Vagina (tissue), 2 donors: ENCODE measurements at regions of chr19 and their contacts with region 1.

Region 1: DNA sequence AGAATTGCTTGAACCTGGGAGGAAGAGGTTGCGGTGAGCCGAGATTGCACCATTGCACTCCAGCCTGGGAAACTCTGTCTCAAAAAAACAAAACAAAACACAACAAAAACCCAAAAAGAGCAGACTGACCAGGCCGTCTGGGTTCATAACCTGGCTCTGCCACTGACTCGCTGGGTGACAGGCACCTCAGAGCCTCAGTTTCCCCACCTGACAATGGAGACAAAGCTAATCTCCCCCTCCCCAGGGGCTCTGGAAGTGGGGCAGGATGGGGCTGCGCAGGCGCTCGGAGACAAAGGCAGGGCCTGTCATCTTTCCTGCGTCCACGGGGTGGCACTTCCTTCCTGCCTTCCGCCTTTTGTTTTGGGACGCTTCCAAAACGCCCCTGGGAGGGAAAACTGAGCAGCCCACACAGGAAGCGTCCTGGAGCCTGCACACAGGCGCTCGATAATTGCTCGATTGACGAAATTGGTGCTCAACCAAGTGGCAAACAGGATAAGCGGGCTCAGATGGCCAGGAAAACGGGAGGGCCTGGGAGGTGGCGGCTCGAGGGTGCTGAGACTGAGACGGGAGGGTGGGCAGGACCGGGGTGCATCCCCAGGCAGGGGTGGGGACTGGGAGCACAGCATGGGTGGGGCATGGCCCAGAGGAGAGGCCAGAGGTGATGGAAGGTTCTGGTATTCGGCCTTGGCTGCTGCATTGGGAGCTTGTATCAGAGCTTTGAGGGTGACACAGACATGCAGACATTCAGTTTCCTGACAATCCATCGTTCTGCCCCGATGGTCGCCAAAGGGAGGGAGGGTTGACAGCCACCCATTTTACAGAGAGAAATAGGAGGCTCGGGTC is 17.8 kb downstream of the SPC24 start:
- DNase-seq: peak in 1 of 2 donors; percentile 96
- H3K4me3 ChIP-seq: peak overlapping the region; percentile 14 to 30
- H3K27ac ChIP-seq: peak overlapping the region; percentile 94
- H3K4me1 ChIP-seq: peaks cover 56% of the 10 kb centered on the region
- H3K27me3 ChIP-seq: no peaks in the 10 kb centered on the region
- CTCF ChIP-seq: peak; percentile 55 to 87 (median 76)
- POLR2A ChIP-seq: no peak

Region 2: DNA sequence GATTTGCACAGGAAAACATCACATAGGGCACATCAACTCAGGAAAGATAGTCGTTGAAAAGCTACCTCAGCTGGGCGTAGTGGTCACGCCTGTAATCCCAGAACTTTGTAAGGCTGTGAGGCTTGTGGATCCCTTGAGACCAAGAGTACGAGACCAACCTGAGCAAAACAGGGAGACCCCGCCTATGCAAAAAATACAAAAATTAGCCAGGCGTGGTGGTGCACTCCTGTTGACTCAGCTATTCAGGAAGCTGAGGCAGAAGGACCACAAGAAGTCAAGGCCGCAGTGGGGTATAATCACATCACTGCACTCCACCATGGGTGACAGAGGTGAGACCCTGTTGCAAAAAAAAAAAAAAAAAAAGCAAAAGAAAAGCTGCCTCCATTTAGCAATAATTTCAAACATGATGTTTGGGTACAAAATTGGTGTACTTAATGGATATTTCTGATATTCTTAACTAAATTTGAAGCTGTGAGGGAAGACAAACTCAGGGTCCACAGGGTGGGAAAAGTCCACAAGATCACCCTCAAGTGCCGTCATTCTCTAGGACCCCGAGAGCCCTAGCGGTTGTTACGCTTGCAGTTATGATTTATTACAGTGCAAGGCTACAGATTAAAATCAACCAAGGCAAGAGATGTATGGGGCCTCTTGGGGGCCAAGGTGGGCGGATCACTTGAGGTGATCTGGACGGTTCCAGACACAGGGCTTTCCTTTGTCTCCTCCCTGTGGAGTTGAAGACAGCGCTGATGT is 91.0 kb before region 1 on chr19:
- intact Hi-C with region 1: no loop called
- DNase-seq: no peak
- H3K4me3 ChIP-seq: no peak overlapping the region
- H3K27ac ChIP-seq: no peak overlapping the region
- H3K4me1 ChIP-seq: no peaks in the 10 kb centered on the region
- H3K27me3 ChIP-seq: no peaks in the 10 kb centered on the region
- CTCF ChIP-seq: no peak
- POLR2A ChIP-seq: no peak

Region 3: DNA sequence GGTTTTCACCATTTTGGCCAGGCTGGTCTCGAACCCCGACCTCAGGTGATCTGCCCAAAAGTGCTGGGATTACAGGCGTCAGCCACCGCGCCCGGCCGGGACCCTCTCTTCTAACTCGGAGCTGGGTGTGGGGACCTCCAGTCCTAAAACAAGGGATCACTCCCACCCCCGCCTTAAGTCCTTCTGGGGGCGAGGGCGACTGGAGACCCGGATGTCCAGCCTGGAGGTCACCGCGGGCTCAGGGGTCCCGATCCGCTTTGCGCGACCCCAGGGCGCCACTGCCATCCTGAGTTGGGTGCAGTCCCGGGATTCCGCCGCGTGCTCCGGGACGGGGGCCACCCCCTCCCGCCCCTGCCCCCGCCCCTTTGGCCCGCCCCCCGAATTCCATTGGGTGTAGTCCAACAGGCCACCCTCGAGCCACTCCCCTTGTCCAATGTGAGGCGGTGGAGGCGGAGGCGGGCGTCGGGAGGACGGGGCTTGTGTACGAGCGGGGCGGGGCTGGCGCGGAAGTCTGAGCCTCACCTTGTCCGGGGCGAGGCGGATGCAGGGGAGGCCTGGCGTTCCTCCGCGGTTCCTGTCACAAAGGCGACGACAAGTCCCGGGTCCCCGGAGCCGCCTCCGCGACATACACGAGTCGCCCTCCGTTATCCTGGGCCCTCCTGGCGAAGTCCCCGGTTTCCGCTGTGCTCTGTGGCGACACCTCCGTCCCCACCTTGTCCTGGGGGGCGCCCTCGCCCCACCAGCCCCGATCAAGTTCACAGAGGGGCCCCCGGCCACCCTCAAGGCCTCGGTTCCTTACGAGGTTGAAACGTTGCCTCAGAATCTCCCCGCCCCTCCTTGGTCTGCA is 47.5 kb before region 1 on chr19:
- intact Hi-C with region 1: loop called (anchors 5 kb)
- DNase-seq: peak in 1 of 2 donors; percentile 98
- H3K4me3 ChIP-seq: peak overlapping the region; percentile 70 to 83
- H3K27ac ChIP-seq: peak overlapping the region; percentile 99
- H3K4me1 ChIP-seq: peaks cover 54% of the 10 kb centered on the region
- H3K27me3 ChIP-seq: no peaks in the 10 kb centered on the region
- CTCF ChIP-seq: no peak
- POLR2A ChIP-seq: peak in 1 of 2 donors; percentile 96

Region 4: DNA sequence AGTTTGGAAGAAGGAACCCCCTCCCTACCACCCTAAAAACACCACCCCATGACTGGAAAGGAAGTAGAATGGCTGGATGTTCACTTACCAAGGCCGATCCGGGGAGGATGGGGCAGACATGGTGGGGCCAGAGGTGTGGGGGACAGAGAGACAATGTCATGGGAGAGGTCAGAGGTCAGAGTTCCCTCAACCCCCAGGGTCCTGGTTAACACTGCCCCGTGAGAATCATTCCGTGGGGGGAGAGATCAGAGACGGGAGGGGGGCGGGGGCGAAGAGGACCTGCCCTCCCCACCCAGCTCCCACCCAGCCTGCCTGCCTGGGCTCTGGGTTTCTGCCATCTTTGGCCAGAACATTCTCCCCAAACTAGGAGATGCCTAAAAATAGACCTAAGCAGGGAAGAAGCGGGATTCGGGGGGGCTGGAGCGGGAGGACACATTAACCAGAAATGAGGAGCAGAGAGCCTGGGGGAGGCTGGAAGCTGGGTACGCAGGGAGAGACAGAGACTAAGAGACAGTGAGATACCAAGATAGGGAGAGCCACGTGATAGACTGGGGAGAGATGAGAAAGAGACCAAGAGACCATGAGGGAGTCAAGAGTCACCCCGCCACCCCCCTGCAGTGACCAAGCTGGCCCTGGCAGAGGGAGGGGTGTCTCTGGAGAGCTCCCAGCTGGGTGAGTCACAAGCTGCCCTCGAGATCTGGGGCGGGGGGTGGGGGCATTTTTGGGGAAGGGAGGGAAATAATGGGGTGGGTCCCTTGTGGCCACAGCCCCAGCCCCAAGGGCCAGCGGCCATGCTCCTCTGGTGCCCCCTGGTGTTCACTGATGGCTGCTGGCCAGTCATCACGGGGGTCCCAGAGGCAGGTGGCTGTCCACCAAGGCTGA is 65.7 kb after region 1 on chr19:
- intact Hi-C with region 1: loop called (anchors 1 kb)
- DNase-seq: peak in 1 of 2 donors; percentile 97
- H3K4me3 ChIP-seq: no peak overlapping the region
- H3K27ac ChIP-seq: peak overlapping the region; percentile 95
- H3K4me1 ChIP-seq: peaks cover 42% of the 10 kb centered on the region
- H3K27me3 ChIP-seq: no peaks in the 10 kb centered on the region
- CTCF ChIP-seq: peak; percentile 64 to 88 (median 81)
- POLR2A ChIP-seq: no peak